PC-9 (cell line): ENCODE measurements at regions of chr12 and their contacts with region 1.

Region 1: GRCh38 chr12:92784795-92785562 is 82.2 kb downstream of the PLEKHG7 start:
- DNase-seq: peak; percentile 23 to 74
- H3K4me3 ChIP-seq: no peak overlapping the region
- H3K27ac ChIP-seq: no peak overlapping the region
- H3K4me1 ChIP-seq: no peaks in the 10 kb centered on the region
- H3K27me3 ChIP-seq: no peaks in the 10 kb centered on the region
- CTCF ChIP-seq: peak; percentile 76

Region 2: DNA sequence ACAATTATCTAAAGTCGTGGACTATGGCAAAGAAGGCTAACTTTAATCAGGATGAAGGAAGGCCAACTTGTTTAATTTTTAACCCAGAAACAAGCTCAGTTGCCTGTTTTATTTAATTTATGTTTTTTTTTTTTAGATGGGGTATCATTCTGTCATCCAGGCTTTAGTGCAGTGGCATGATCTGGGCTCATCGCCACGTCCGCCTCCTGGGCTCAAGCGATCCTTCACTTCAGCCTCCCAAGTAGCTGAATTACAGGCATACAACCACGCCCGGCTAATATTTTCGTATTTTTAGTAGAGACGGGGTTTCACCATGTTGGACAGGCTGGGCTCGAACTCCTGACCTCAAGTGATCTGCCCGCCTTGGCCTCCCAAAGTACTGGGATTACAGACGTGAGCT is 612.4 kb after region 1 on chr12:
- CTCF ChIA-PET with region 1: no interaction called
- POLR2A ChIA-PET with region 1: no interaction called
- intact Hi-C with region 1: loop called (anchors 2 kb)
- DNase-seq: no peak
- H3K4me3 ChIP-seq: no peak overlapping the region
- H3K27ac ChIP-seq: no peak overlapping the region
- H3K4me1 ChIP-seq: no peaks in the 10 kb centered on the region
- H3K27me3 ChIP-seq: no peaks in the 10 kb centered on the region
- CTCF ChIP-seq: no peak

Region 3: DNA sequence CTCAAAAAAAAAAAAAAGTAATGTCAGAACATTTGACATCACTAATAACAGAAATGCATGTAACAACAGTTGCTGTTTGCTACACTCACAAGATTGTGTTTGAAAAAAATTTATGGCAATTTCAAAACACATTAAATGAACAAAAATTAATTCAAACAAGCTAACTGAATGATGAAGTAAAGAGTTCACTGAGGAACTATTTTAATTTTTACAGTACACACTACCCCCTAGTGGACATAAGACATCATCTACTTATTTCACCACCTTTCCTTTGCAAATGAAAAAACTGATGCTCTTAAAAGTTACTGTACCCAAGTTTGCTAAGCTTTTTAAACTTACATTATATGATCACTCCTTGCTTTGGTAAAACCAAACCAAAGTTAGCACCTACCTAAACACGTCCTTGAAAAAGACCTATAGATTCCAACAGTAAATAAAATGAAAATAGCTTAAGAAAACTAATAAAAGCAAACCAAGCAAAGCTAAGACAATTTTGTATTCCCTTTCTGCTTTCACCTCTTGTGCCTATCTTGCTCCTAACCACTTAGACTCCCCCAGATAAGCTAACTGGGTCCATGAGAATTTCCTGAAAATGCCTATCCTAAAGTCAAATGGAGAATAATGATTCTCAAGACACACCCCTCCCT is 634.5 kb after region 1 on chr12:
- CTCF ChIA-PET with region 1: no interaction called
- POLR2A ChIA-PET with region 1: no interaction called
- intact Hi-C with region 1: loop called (anchors 5 kb)
- DNase-seq: peak in 1 of 2 experiments; percentile 46
- H3K4me3 ChIP-seq: no peak overlapping the region
- H3K27ac ChIP-seq: no peak overlapping the region
- H3K4me1 ChIP-seq: no peaks in the 10 kb centered on the region
- H3K27me3 ChIP-seq: no peaks in the 10 kb centered on the region
- CTCF ChIP-seq: peak; percentile 79

Region 4: GRCh38 chr12:93624595-93625294 is 839.8 kb after region 1 on chr12:
- CTCF ChIA-PET with region 1: interaction called, 12 read pairs
- POLR2A ChIA-PET with region 1: no interaction called
- intact Hi-C with region 1: no loop called
- DNase-seq: peak; percentile 24 to 95
- H3K4me3 ChIP-seq: no peak overlapping the region
- H3K27ac ChIP-seq: peak overlapping the region; percentile 94
- H3K4me1 ChIP-seq: peaks cover 26% of the 10 kb centered on the region
- H3K27me3 ChIP-seq: no peaks in the 10 kb centered on the region
- CTCF ChIP-seq: no peak